Activated B cell treated with CpG ODN at 0.5 μM for 24 hours (primary cell): ENCODE measurements at regions of chr19 and their contacts with region 1.

Region 1: DNA sequence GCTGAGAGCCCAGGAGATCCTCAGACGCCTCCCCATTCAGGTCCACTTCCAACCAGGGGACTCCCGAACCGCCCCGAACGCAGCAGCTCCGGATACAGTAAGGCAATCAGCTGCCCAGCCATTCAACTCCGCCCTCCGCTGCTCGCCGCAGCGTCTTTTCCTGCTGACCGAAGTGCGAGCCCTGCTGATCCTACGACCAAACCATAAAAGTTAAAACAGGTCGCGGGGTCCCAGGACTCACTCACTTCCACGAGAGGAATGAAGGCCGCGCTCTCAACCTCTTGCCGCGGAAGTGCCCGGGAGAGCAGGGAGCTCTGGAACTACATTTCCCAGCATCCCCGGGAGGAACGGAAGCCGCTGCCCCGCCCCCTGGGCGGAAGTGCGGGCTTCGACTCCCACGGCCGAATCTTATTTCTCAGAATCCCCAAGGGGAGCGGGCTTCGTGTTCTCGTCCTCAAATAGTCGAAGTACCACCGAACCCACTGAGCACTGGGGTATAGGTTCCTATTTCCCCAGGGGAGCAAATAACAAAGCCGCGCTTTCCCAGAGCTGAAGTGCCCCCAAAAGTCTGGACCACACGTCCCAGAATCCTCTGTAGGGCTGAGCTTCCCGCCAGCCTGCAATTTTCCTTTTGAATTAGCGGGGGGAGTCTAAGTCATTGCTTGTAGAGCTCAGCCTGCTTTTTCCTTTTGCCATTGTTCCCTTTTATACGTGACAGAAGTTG is at the start of gene ZNF45:
- DNase-seq: peak; percentile 81
- ATAC-seq: peak; percentile 96
- H3K4me3 Mint-ChIP-seq: peak within 1 kb of the TSS; percentile 93
- H3K27ac Mint-ChIP-seq: peak within 1 kb of the TSS; percentile 89
- H3K4me1 Mint-ChIP-seq: peaks cover 22% of the 10 kb centered on the region
- H3K27me3 Mint-ChIP-seq: peaks cover 4% of the 10 kb centered on the region
- CTCF ChIP-seq: no peak
- total RNA-seq, gene ZNF45: 17.2 and 19.1 TPM in 2 replicates

Region 2: GRCh38 chr19:43380771-43381386 is 554.3 kb before region 1 on chr19:
- CTCF ChIA-PET with region 1: no interaction called
- POLR2A ChIA-PET with region 1: no interaction called
- intact Hi-C with region 1: no loop called
- DNase-seq: no peak
- ATAC-seq: no peak
- H3K4me3 Mint-ChIP-seq: no peak overlapping the region
- H3K27ac Mint-ChIP-seq: no peak overlapping the region
- H3K4me1 Mint-ChIP-seq: peaks cover 4% of the 10 kb centered on the region
- H3K27me3 Mint-ChIP-seq: peaks cover 6% of the 10 kb centered on the region
- CTCF ChIP-seq: no peak

Region 3: GRCh38 chr19:43774103-43774939 is 160.8 kb before region 1 on chr19:
- CTCF ChIA-PET with region 1: no interaction called
- POLR2A ChIA-PET with region 1: no interaction called
- intact Hi-C with region 1: no loop called
- DNase-seq: no peak
- ATAC-seq: no peak
- H3K4me3 Mint-ChIP-seq: no peak overlapping the region
- H3K27ac Mint-ChIP-seq: no peak overlapping the region
- H3K4me1 Mint-ChIP-seq: peaks cover 49% of the 10 kb centered on the region
- H3K27me3 Mint-ChIP-seq: no peaks in the 10 kb centered on the region
- CTCF ChIP-seq: no peak

Region 4: DNA sequence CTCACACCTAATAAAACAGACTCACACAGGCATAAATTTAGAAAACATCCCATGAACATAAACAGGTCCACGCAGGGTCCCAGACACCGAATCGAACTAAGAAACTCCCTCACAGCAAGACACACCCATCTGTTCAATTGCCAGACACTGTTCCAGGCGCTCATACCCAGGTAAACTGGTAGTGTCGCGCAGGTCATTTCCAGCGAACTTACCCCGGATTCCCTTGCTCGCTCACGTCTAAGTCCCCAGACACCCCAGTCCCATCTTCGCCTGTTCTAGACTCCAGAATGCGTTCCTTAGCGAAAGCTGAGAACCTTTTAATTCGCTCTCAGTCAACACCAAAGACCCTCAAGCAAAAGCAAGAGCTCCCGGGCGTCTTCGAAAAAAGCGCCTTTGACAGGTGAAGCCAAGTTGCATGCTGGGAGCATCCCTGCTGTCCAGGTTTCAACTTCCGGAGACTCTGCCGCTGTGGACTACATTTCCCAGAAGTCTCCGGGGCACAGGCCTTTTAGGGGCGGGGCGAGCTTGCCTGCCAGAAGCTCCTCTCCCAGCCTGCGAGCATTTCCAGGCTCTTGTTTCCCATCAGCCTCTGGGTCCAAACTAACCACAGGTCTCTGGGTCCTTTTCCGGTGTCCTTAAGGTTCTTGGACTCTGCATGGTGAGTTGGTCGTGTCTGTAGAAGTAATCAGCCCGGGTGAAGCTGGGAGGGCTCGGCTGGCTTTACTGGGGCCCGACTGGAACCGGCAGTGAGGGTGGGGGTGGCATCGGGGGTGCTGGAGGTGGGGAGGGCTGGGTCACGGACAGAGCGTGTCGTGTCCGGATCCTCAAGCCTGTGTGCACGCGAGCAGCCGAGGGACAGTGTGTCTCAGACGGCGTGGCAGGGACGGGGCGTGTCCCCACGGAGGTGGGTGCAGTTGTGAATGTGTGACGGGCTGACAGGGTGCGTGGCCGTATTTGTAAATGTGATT is 108.1 kb before region 1 on chr19 and contains the start of gene ZNF283:
- CTCF ChIA-PET with region 1: no interaction called
- POLR2A ChIA-PET with region 1: interaction called, 3 read pairs
- intact Hi-C with region 1: loop called (anchors 1 kb)
- DNase-seq: peak; percentile 76
- ATAC-seq: peak; percentile 94
- H3K4me3 Mint-ChIP-seq: peak within 1 kb of the TSS; percentile 92
- H3K27ac Mint-ChIP-seq: peak within 1 kb of the TSS; percentile 53
- H3K4me1 Mint-ChIP-seq: peaks cover 16% of the 10 kb centered on the region
- H3K27me3 Mint-ChIP-seq: peaks cover 7% of the 10 kb centered on the region
- CTCF ChIP-seq: no peak
- total RNA-seq, gene ZNF283: 10.4 and 13.0 TPM in 2 replicates

Region 5: GRCh38 chr19:43950834-43951645 is 15.9 kb after region 1 on chr19 and contains the start of gene ZNF221:
- CTCF ChIA-PET with region 1: interaction called, 3 read pairs
- POLR2A ChIA-PET with region 1: interaction called, 15 read pairs
- intact Hi-C with region 1: loop called (anchors 1 kb)
- DNase-seq: peak; percentile 52
- ATAC-seq: peak; percentile 91
- H3K4me3 Mint-ChIP-seq: peak within 1 kb of the TSS; percentile 98
- H3K27ac Mint-ChIP-seq: peak within 1 kb of the TSS; percentile 82
- H3K4me1 Mint-ChIP-seq: peaks cover 10% of the 10 kb centered on the region
- H3K27me3 Mint-ChIP-seq: peaks cover 11% of the 10 kb centered on the region
- CTCF ChIP-seq: no peak
- total RNA-seq, gene ZNF221: 2.6 TPM in 2 replicates

Region 6: DNA sequence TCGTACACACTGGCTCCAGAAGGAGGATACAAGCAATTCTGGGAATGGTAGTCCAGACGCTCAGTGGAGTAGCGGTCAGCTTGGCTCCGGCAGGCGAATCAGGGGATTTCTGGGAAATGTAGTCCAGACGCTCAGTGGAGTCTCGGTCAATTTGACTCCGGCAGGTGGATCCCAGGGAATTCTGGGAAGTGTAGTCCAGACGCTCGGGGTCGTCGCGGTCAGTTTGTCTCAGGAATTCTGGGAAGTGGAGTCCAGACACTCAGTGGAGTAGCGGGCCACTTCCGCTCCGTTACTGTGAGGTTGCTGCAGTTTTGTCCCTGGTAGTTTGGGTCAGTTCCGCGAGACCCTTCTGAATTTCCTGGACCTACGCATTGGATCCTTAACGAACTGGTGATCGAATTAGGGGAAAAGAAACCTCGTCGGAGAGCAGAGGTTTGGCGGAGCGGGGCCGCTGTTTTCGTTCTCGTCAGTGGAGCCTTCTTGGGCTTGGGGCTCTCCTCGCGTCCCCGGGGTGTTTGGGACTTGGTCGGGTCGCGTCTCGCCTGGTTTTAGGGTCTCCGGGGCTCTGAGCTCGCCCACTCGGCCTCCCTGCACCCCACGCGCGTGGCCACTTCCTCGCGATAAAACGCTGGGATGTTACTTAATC is 178.1 kb after region 1 on chr19 and contains the start of gene ZNF225:
- CTCF ChIA-PET with region 1: no interaction called
- POLR2A ChIA-PET with region 1: interaction called, 4 read pairs
- intact Hi-C with region 1: loop called (anchors 5 kb)
- DNase-seq: peak; percentile 65
- ATAC-seq: peak; percentile 95
- H3K4me3 Mint-ChIP-seq: peak within 1 kb of the TSS; percentile 97
- H3K27ac Mint-ChIP-seq: peak within 1 kb of the TSS; percentile 83
- H3K4me1 Mint-ChIP-seq: peaks cover 31% of the 10 kb centered on the region
- H3K27me3 Mint-ChIP-seq: no peaks in the 10 kb centered on the region
- CTCF ChIP-seq: no peak
- total RNA-seq, gene ZNF225: 7.9 and 9.2 TPM in 2 replicates

Region 7: DNA sequence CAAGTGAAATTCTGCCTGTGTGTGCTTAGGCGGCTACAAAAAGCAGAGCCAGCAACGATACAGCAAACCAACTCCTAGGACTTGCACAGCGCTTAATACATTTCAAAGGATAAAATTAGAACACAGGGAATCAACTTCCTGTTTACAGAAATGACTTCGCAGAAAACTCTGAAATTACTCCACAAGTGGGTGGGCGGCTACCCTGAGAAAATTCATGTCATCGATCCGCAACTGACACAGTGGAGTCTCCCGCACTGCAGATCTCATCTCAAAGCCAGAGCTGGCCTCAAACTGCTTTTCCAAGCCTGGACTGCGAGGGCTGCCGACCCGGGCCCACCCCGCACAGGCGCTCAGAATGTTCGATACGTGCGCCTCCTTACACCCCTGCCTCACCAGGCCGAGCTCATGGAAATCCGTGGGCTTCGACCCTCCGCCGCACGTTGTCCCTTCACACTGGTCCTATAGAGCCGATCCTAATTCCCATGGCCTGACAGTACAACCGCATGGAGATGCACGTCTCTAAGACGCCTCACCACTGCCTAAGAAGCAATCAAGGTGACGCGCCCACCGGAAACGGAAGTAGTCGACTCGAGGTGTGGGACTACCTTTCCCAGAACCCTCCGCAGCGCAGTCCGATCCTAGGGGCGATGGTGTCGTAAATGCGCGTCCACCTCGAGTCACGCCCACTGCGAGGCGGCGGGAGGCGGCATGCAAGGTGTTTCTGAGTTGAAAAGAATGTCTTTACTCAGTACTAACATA is 512.9 kb after region 1 on chr19 and contains the start of gene ZNF229:
- CTCF ChIA-PET with region 1: no interaction called
- POLR2A ChIA-PET with region 1: no interaction called
- intact Hi-C with region 1: loop called (anchors 2 kb)
- DNase-seq: peak; percentile 69
- ATAC-seq: peak; percentile 99
- H3K4me3 Mint-ChIP-seq: peak within 1 kb of the TSS; percentile 87
- H3K27ac Mint-ChIP-seq: peak within 1 kb of the TSS; percentile 79
- H3K4me1 Mint-ChIP-seq: peaks cover 12% of the 10 kb centered on the region
- H3K27me3 Mint-ChIP-seq: peaks cover 21% of the 10 kb centered on the region
- CTCF ChIP-seq: no peak
- total RNA-seq, gene ZNF229: 3.1 and 3.7 TPM in 2 replicates